CD4-positive, alpha-beta T cell (primary cell): ENCODE measurements at regions of chr13 and their contacts with region 1.

Region 1: GRCh38 chr13:26498656-26499591 is 58.6 kb upstream of the WASF3 start:
- DNase-seq: no peak
- ATAC-seq: no peak
- H3K4me3 ChIP-seq: no peak overlapping the region
- H3K4me3 Mint-ChIP-seq: no peak overlapping the region
- H3K27ac ChIP-seq: no peak overlapping the region
- H3K27ac Mint-ChIP-seq: no peak overlapping the region
- H3K4me1 ChIP-seq: no peaks in the 10 kb centered on the region
- H3K4me1 Mint-ChIP-seq: peaks cover 9% of the 10 kb centered on the region
- H3K27me3 ChIP-seq: peaks cover 0 to 4% of the 10 kb centered on the region in 2 experiments
- H3K27me3 Mint-ChIP-seq: peaks cover 10% of the 10 kb centered on the region
- CTCF ChIP-seq: no peak

Region 2: GRCh38 chr13:26482451-26483197 is 16.3 kb before region 1 on chr13:
- CTCF ChIA-PET with region 1: interaction called, 3 read pairs
- POLR2A ChIA-PET with region 1: no interaction called
- intact Hi-C with region 1: loop called in 1 of 2 experiments (anchors 1 kb)
- DNase-seq: peak; percentile 37 to 87 (median 54)
- ATAC-seq: peak; percentile 97
- H3K4me3 ChIP-seq: no peak overlapping the region
- H3K4me3 Mint-ChIP-seq: peak overlapping the region; percentile 16
- H3K27ac ChIP-seq: peak overlapping the region in 1 of 2 donors; percentile 60
- H3K27ac Mint-ChIP-seq: peak overlapping the region; percentile 79
- H3K4me1 ChIP-seq: peaks cover 23% of the 10 kb centered on the region
- H3K4me1 Mint-ChIP-seq: peaks cover 27% of the 10 kb centered on the region
- H3K27me3 ChIP-seq: no peaks in the 10 kb centered on the region
- H3K27me3 Mint-ChIP-seq: no peaks in the 10 kb centered on the region
- CTCF ChIP-seq: peak; percentile 85